GM10248 (cell line): ENCODE measurements at regions of chr12 and their contacts with region 1.

Region 1: GRCh38 chr12:56359851-56360767 is at the start of gene STAT2:
- DNase-seq: peak; percentile 96
- CTCF ChIP-seq: no peak

Region 2: DNA sequence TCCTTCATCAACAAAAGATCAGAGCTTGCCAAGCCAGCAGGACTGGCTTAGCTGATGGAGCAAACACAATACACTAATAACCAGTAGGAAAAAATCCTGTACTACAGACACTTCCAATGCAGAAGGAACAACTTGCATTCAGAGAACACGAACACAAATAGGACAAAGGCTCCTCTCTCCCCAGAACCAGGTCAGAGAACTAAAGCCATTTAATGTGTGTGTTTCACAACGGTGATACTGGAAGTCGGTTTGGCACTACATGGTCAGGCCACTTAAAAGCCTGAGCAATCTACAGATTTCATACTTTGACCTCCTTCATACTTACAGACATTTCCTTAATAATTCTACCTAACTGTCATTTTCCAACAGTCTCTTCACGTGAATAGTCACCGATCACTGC is 66.3 kb before region 1 on chr12:
- CTCF ChIA-PET with region 1: no interaction called
- POLR2A ChIA-PET with region 1: no interaction called
- DNase-seq: no peak
- CTCF ChIP-seq: no peak

Region 3: GRCh38 chr12:56315622-56316473 is 44.3 kb before region 1 on chr12 and contains the start of gene CNPY2:
- CTCF ChIA-PET with region 1: interaction called, 11 read pairs
- POLR2A ChIA-PET with region 1: interaction called, 6 read pairs
- DNase-seq: peak; percentile 96
- CTCF ChIP-seq: peak; percentile 32

Region 4: GRCh38 chr12:56333679-56334489 is 26.2 kb before region 1 on chr12 and contains the start of gene PAN2:
- CTCF ChIA-PET with region 1: interaction called, 18 read pairs
- POLR2A ChIA-PET with region 1: interaction called, 8 read pairs
- DNase-seq: peak; percentile 98
- CTCF ChIP-seq: peak; percentile 39

Region 5: GRCh38 chr12:56346703-56347102 is 13.4 kb before region 1 on chr12:
- CTCF ChIA-PET with region 1: interaction called, 21 read pairs
- POLR2A ChIA-PET with region 1: interaction called, 29 read pairs
- DNase-seq: no peak
- CTCF ChIP-seq: no peak

Region 6: DNA sequence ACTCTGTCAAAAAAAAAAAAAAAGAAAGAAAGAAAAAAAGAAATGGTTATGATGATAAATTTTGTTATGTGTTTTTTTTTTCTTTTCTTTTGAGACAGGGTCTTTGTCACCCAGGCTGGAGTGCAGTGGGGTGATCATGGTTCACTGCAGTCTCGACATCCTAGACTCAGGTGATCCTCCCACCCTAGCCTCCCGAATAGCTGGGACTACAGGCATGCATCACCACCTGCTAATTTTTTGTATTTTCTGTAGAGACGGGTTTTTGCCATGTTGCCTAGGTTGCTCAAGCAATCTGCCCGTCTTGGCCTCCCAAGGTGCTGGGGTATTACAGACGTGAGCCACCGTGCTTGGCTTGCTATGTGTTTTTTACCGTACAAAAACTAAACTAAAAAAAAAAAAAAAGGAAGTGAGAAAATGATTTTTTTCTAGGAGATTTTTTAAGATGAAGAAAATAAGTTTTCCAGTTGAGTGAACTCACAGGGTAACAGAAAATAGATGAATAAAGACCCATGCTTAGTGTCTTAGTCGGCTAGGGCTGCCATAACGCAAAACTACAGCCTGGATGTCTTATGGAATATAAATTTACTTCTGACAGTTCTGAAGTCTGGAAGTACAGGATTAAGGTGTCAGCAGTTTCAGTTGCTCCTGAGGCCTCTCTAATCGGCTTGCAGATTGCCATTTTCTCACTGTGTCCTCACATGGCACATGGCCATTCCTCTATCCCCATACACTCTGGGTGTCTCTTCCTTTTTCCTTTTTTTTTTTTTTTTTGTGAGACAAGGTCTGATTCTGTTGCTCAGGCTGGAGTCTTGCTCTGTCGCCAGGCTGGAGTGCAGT is 15.7 kb after region 1 on chr12:
- CTCF ChIA-PET with region 1: interaction called, 8 read pairs
- POLR2A ChIA-PET with region 1: interaction called, 10 read pairs
- DNase-seq: peak; percentile 35
- CTCF ChIP-seq: no peak

Region 7: DNA sequence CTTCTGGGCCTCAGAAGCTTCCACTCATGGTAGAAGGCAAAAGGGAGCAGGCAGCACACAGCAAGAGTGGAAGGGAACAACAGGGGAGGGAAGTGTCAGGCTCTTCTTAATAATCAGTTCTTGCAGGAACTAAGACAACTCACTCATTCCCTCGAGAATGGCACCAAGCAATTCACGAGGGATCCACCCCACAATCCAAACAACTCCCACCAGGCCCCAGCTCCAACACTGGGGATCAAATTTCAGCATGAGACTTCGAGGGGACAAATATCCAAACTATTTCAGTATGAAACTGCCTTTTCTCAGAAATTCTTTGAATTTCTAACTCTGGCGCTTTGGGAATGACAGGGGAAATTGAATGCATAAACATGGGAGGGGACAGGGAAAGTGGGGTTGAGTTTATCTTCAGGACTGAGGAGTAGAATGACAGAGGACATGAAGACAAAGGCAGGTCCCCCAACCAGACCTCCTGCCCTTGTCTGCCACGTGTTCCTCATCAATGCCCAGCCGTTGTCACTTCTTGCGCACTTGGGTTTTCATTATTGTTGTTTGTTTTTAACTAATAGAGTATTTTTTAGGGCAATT is 27.1 kb after region 1 on chr12:
- CTCF ChIA-PET with region 1: no interaction called
- POLR2A ChIA-PET with region 1: no interaction called
- DNase-seq: no peak
- CTCF ChIP-seq: no peak

Region 8: DNA sequence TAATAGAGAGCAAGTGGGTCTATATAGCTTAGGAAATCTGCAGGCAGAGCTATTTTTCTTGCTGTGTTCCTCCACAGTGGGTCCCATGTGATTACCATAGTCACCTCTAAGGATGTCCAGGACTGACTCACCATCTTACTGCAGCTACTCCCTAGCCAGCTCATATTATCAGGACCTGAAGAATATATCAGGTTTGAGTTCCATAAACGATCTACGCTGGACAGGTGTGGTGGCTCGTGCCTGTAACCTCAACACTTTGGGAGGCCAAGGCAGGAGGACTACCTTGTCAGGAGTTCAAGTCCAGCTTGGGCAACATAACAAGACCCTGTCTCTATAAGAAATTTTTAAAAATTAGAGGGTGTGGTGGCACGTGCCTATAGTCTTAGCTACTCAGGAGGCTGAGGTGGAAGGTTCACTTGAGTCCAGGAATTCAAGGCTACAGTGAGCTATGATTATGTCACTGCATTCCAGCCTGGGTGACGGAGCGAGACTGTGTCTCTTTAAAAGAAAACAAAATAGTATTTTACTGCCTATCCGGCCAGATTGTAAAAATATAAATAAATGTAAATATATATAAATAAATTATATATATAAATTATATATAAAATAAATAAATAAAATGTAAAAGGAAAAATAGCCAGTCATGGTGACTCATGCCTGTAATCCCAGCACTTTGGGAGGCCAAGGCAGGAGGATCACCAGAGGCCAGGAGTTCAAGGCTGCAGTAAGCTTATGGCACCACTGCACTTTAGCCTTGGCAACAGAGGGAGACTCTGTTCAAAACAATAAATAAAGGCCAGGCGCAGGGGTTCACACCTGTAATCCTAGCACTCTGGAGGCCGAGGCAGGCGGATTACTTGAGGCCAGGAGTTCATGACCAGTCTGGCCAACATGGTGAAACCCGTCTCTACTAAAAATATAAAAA is 101.4 kb after region 1 on chr12:
- CTCF ChIA-PET with region 1: interaction called, 30 read pairs
- POLR2A ChIA-PET with region 1: interaction called, 8 read pairs
- DNase-seq: no peak
- CTCF ChIP-seq: no peak

Region 9: DNA sequence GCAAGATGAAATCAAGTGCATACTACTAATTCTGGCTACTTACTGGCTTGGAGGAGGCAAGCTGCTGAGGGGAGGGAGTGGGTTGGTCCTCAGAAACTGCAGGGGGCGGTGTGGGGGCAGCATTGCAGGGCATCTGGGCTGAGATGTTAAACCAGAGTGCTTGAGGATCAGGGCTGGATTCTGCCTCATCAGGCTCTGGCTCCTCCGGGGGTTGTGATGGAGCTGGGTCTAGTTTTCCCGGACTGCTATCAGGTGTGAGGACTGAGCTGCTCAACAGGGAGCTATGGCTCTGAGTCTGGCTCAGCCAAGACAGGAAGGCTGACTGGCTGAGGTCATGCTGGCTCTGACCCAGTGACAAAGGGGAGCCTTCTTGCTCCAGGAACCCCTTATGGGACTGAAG is 241.4 kb after region 1 on chr12:
- CTCF ChIA-PET with region 1: no interaction called
- POLR2A ChIA-PET with region 1: no interaction called
- DNase-seq: peak; percentile 42
- CTCF ChIP-seq: no peak

Region 10: GRCh38 chr12:57416039-57416996 is 1056.2 kb after region 1 on chr12:
- CTCF ChIA-PET with region 1: no interaction called
- POLR2A ChIA-PET with region 1: no interaction called
- DNase-seq: no peak
- CTCF ChIP-seq: no peak